CD8-positive, alpha-beta T cell (primary cell): ENCODE measurements at regions of chr22 and their contacts with region 1.

Region 1: DNA sequence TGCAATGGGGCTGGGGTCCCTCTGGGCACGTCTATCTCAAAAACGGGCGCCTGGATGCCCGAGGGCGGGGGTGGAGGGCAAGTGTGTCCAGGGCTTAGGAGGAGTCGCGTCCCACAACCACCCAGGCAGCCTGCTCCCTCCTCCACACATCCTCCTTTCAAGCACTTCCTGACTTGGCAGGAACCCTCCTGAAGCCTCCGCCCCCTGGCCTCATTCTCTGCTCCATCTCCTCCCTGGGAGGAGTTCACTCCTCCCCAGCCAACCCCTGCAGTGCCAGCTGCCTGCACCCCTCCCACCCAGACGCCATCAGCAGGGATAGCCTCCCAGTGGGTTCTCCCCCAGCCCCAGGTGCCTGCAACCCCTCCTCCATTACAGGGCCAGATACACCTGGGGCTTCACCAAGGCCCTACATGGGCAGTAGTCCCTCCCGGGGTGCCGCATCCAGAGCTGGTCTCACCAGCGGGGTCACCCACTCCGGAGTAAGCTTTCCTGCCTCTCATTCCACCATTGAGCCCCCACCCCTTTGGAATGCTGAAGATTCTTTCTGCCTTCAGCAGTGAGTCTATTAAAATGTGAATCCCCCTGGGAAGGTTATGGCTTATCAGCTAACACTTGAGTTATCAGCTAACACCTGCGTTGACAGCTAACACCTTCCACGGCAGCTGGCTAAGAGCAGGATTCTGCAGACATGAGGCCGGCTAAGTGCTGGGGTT is 24.4 kb downstream of the RTN4R start:
- DNase-seq: peak in 8 of 9 experiments; percentile 33 to 79 (median 64)
- ATAC-seq: peak; percentile 45
- H3K4me3 ChIP-seq: peak overlapping the region; percentile 24 to 72
- H3K4me3 Mint-ChIP-seq: peak overlapping the region; percentile 77
- H3K27ac ChIP-seq: peak overlapping the region; percentile 46 to 84
- H3K27ac Mint-ChIP-seq: peak overlapping the region; percentile 98
- H3K4me1 ChIP-seq: peaks cover 87% of the 10 kb centered on the region
- H3K4me1 Mint-ChIP-seq: peaks cover 51% of the 10 kb centered on the region
- H3K27me3 ChIP-seq: no peaks in the 10 kb centered on the region
- H3K27me3 Mint-ChIP-seq: no peaks in the 10 kb centered on the region
- CTCF ChIP-seq: no peak

Region 2: GRCh38 chr22:20268279-20269012 is 24.8 kb after region 1 on chr22 and contains the start of gene RTN4R:
- CTCF ChIA-PET with region 1: no interaction called
- POLR2A ChIA-PET with region 1: no interaction called
- intact Hi-C with region 1: loop called (anchors 2 kb)
- DNase-seq: peak; percentile 36 to 77 (median 54)
- ATAC-seq: peak; percentile 86
- H3K4me3 ChIP-seq: peak within 1 kb of the TSS; percentile 19 to 31
- H3K4me3 Mint-ChIP-seq: peak within 1 kb of the TSS; percentile 74
- H3K27ac ChIP-seq: no peak within 1 kb of the TSS
- H3K27ac Mint-ChIP-seq: no peak within 1 kb of the TSS
- H3K4me1 ChIP-seq: peaks cover 10% of the 10 kb centered on the region
- H3K4me1 Mint-ChIP-seq: peaks cover 6% of the 10 kb centered on the region
- H3K27me3 ChIP-seq: no peaks in the 10 kb centered on the region
- H3K27me3 Mint-ChIP-seq: no peaks in the 10 kb centered on the region
- CTCF ChIP-seq: peak; percentile 48
- total RNA-seq, gene RTN4R: 1.1 to 1.2 TPM